Pancreas (tissue), 10 donors: ENCODE measurements at regions of chr20 and their contacts with region 1.

Region 1: DNA sequence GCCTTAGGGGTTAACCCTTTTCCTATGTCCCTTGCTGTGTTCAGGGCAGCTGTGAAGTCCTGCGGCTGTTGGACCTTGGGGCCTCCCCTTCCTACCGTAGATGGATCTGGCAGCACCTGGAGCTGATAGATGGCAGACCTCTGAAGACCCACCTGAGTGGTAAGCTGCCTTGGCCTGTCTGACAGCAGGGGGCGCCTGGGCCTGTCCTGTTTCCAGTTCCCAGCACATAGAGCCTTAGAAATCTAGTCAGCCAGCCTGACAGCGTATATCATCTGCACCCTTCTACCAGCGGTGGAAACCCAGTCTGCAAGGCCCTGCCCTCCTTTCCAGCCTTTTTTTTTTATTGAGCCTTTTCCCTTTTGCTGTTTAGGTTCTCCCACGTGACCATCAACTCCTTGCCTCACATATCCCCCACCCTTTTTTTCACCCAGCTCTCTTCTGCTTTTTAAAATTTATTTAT is 26.6 kb downstream of the CNBD2 start:
- DNase-seq: peak; percentile 71 to 91 (median 84)
- ATAC-seq: peak; percentile 88 to 98 (median 96)
- H3K4me3 ChIP-seq: no peak overlapping the region
- H3K27ac ChIP-seq: no peak overlapping the region
- H3K4me1 ChIP-seq: no peaks in the 10 kb centered on the region
- H3K27me3 ChIP-seq: no peaks in the 10 kb centered on the region
- CTCF ChIP-seq: peak; percentile 68 to 83 (median 72)

Region 2: DNA sequence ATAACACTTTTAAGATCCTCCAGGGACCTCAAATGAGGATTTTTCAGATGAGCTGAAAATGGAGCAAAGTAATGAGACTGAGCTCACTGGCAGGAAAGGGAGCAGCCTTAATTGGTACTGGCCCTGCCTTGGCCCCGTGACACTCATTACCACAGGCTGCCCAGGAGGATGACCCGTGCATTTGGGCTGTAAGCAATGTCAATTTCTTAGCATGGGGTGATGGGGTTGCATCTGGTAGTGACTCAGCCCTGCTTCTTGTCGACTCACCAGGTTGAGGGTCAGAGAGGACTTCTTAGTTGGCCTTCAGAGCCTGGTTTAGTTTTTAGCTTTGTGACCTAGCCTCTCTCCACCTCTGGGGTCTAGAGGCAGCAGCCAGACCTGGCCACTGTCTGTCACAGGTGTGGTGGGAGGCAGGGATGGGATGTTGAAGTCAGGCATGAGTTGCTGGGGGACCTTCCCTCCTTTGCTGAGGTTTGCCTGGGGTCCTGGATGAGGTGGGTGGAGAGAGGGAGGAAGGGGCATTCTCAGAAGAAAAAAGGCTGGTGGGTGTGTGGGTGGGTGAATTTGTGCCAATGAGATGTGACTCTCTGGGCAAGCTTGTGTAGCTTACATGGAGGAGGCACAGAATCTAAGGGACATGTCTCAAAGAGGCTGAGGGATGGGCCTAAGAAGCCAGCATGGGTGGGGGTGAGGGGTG is 133.6 kb after region 1 on chr20:
- intact Hi-C with region 1: loop called in 2 of 3 experiments (anchors 5 to 10 kb)
- DNase-seq: no peak
- ATAC-seq: peak in 2 of 4 donors; percentile 51 to 59
- H3K4me3 ChIP-seq: no peak overlapping the region
- H3K27ac ChIP-seq: no peak overlapping the region
- H3K4me1 ChIP-seq: no peaks in the 10 kb centered on the region
- H3K27me3 ChIP-seq: no peaks in the 10 kb centered on the region
- CTCF ChIP-seq: no peak

Region 3: GRCh38 chr20:36144336-36144735 is 149.3 kb after region 1 on chr20:
- intact Hi-C with region 1: loop called (anchors 2 to 10 kb)
- DNase-seq: no peak
- ATAC-seq: no peak
- H3K4me3 ChIP-seq: no peak overlapping the region
- H3K27ac ChIP-seq: no peak overlapping the region
- H3K4me1 ChIP-seq: no peaks in the 10 kb centered on the region
- H3K27me3 ChIP-seq: no peaks in the 10 kb centered on the region
- CTCF ChIP-seq: no peak